AG04450 (cell line): ENCODE measurements at regions of chr2 and their contacts with region 1.

Region 1: GRCh38 chr2:85635636-85636035 is 19.6 kb downstream of the USP39 start:
- DNase-seq: no peak
- H3K4me3 ChIP-seq: no peak overlapping the region
- H3K27ac ChIP-seq: peak overlapping the region; percentile 21
- H3K27me3 ChIP-seq: no peaks in the 10 kb centered on the region
- CTCF ChIP-seq: no peak

Region 2: GRCh38 chr2:85188852-85189587 is 446.6 kb before region 1 on chr2:
- CTCF ChIA-PET with region 1: no interaction called
- POLR2A ChIA-PET with region 1: no interaction called
- DNase-seq: no peak
- H3K4me3 ChIP-seq: no peak overlapping the region
- H3K27ac ChIP-seq: no peak overlapping the region
- H3K27me3 ChIP-seq: no peaks in the 10 kb centered on the region
- CTCF ChIP-seq: no peak

Region 3: GRCh38 chr2:85490861-85491755 is 144.5 kb before region 1 on chr2:
- CTCF ChIA-PET with region 1: no interaction called
- POLR2A ChIA-PET with region 1: no interaction called
- DNase-seq: no peak
- H3K4me3 ChIP-seq: no peak overlapping the region
- H3K27ac ChIP-seq: no peak overlapping the region
- H3K27me3 ChIP-seq: no peaks in the 10 kb centered on the region
- CTCF ChIP-seq: no peak

Region 4: GRCh38 chr2:85511008-85511811 is 124.4 kb before region 1 on chr2:
- CTCF ChIA-PET with region 1: no interaction called
- POLR2A ChIA-PET with region 1: no interaction called
- DNase-seq: no peak
- H3K4me3 ChIP-seq: no peak overlapping the region
- H3K27ac ChIP-seq: no peak overlapping the region
- H3K27me3 ChIP-seq: no peaks in the 10 kb centered on the region
- CTCF ChIP-seq: no peak

Region 5: DNA sequence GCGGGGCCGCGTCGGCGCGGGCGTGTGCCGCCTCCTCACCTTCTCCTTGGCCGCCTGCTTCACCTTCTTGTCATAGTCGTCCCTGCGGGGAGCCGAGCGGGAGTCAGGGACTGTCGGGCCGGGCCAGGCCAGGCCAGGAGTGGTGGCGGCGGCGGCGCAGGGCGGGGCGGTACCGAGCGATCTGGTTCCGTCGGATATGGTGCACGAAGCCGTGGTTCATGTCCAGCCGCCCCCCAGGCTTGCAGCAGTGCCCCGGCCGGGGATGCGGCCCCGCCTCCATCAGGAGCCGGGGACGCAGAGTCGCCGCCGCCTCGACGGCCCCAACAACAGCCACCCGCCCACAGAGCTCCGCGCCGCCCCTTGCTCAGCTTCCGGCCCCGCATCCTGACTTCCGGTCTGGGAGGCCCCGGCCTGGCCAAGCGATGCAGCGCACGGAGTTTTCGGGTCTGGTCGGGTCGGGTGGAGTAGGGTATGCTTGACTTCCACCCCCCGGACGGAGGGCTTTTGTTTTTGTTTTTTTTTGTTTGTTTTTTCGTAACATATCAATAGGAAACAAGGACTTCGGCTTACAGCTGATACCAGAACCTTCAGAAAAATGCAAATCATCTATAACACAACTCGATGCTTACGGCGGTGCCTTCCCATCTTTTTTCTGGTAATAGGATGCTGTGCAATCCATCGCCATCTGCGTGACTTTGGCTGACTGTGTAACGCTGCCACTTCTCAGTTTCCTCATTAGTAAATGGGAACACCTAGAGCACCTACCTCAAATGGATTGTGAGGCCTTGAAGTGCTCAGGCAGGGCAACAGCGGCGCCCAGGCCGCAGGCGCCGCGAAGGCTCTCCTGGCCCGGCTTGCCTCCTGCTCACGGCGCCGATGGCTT is 23.7 kb before region 1 on chr2 and contains the start of gene C2orf68:
- CTCF ChIA-PET with region 1: interaction called, 15 read pairs
- POLR2A ChIA-PET with region 1: no interaction called
- DNase-seq: peak; percentile 26
- H3K4me3 ChIP-seq: peak within 1 kb of the TSS; percentile 78
- H3K27ac ChIP-seq: peak within 1 kb of the TSS; percentile 47
- H3K27me3 ChIP-seq: no peaks in the 10 kb centered on the region
- CTCF ChIP-seq: no peak
- polyA plus RNA-seq, gene C2orf68: 17.8 and 19.1 TPM in 2 replicates

Region 6: DNA sequence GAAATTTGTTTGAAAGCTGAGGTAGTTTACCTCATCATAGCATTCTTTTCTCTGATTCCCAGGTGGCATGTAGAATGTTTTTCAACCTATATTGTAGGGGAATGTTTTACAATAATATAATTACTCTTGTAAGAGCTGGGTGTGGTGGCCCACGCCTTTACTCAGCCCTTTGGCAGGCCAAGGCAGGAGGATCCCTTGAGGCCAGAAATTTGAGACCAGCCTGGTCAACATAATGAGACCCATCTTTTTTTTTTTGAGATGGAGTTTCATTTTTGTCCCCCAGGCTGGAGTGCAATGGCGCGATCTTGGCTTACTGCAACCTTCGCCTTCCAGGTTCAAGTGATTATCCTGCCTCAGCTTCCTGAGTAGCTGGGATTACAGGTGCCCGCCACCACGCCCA is 16.0 kb before region 1 on chr2:
- CTCF ChIA-PET with region 1: interaction called, 49 read pairs
- POLR2A ChIA-PET with region 1: interaction called, 5 read pairs
- DNase-seq: no peak
- H3K4me3 ChIP-seq: no peak overlapping the region
- H3K27ac ChIP-seq: no peak overlapping the region
- H3K27me3 ChIP-seq: no peaks in the 10 kb centered on the region
- CTCF ChIP-seq: no peak